Endothelial cell of umbilical vein (primary cell): ENCODE measurements at regions of chr3 and their contacts with region 1.

Region 1: DNA sequence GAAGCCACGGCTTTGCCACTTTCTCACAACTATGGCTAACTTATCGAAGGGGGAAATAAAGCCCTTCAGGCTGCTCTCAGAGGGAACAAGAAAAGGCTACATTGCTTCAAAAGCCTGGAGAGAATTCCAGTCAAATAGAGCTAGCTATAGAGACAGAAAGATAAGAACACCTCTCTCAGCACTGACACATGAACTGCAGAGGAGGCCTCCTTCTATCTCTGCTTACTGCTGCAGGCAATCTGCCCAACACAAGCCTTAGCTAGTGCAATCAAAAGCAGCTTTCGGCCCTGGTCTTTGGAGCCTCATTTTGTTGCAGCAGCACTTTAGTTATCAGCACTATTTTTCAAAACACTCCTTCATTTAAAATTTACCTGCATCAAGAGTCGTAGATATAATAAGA is 118.4 kb upstream of the ROBO1 start:
- DNase-seq: no peak
- H3K4me3 ChIP-seq: no peak overlapping the region
- H3K27ac ChIP-seq: no peak overlapping the region
- H3K4me1 ChIP-seq: no peaks in the 10 kb centered on the region
- H3K27me3 ChIP-seq: no peaks in the 10 kb centered on the region
- CTCF ChIP-seq: no peak
- POLR2A ChIP-seq: no peak

Region 2: GRCh38 chr3:79960594-79960993 is 74.4 kb after region 1 on chr3:
- CTCF ChIA-PET with region 1: no interaction called
- POLR2A ChIA-PET with region 1: no interaction called
- dilution Hi-C with region 1: no loop called
- intact Hi-C with region 1: no loop called
- DNase-seq: no peak
- H3K4me3 ChIP-seq: no peak overlapping the region
- H3K27ac ChIP-seq: no peak overlapping the region
- H3K4me1 ChIP-seq: no peaks in the 10 kb centered on the region
- H3K27me3 ChIP-seq: no peaks in the 10 kb centered on the region
- CTCF ChIP-seq: no peak
- POLR2A ChIP-seq: no peak

Region 3: DNA sequence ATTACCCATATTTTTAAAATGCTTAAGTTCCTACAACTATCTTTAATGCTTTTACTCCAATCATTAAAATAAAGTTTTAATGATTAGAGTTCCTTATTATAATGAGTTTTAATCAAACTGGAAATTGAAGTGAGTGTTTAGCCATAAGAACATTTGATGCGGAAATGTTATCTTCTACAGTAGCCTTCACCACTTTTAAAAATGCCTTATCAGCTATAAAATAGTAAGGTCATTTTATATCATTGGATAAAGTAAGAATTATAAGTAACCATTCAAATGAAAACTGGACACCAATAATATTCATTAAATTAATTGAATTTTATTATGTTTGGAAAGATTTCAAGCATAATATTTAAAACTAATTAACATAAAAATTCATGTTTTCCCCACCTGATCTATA is 706.6 kb after region 1 on chr3:
- CTCF ChIA-PET with region 1: no interaction called
- POLR2A ChIA-PET with region 1: no interaction called
- dilution Hi-C with region 1: no loop called
- intact Hi-C with region 1: loop called (anchors 5 kb)
- DNase-seq: no peak
- H3K4me3 ChIP-seq: no peak overlapping the region
- H3K27ac ChIP-seq: no peak overlapping the region
- H3K4me1 ChIP-seq: no peaks in the 10 kb centered on the region
- H3K27me3 ChIP-seq: no peaks in the 10 kb centered on the region
- CTCF ChIP-seq: no peak
- POLR2A ChIP-seq: no peak